Heart right ventricle (tissue), 16 donors: ENCODE measurements at regions of chr17 and their contacts with region 1.

Region 1: DNA sequence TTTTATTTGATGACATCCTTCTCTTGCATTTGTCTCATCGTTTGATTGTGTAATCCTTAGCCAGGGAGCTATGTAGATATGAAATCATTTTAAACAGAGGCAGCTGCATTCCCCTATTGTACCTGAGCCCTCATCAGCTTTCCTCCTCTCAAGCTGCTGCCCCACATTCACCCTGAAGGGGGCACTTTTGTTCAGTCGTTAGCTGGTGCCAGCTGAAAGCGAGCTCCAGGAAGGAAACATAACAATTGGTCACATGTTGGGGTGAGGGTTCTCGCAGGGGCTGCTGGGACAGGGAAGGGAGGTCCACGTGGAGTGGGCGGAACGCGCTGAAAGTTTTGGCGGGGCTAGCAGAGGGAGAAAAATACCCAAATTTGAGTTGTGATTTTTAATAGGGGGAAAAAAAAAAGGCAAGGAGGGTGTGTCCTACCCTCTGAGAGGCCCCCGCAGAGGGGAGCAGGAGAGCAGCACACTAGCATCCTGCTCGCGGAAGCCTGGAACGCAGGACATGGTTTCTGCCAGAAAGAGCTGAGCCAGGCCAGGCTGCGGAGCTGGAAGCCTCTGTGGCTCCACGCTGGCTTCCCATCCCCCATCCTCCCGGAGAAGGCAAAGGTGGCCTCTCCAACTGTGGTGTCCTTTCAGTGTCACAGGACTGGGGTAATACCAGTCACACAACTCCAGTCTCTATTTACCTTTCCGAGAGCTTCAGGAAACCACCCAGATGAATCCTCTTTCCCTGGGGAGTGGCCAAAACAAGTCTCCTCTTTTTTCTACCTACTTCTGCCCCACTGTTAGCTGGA is 8.5 kb upstream of the MSL1 start:
- DNase-seq: peak; percentile 86 to 95
- ATAC-seq: peak; percentile 70 to 79 (median 75)
- H3K4me3 ChIP-seq: peak overlapping the region in 9 of 10 donors; percentile 32 to 59 (median 49)
- H3K27ac ChIP-seq: peak overlapping the region; percentile 71 to 99 (median 93)
- H3K4me1 ChIP-seq: peaks cover 41 to 62% (median 58%) of the 10 kb centered on the region in 9 donors
- H3K27me3 ChIP-seq: no peaks in the 10 kb centered on the region
- CTCF ChIP-seq: peak; percentile 72 to 96 (median 84)

Region 2: DNA sequence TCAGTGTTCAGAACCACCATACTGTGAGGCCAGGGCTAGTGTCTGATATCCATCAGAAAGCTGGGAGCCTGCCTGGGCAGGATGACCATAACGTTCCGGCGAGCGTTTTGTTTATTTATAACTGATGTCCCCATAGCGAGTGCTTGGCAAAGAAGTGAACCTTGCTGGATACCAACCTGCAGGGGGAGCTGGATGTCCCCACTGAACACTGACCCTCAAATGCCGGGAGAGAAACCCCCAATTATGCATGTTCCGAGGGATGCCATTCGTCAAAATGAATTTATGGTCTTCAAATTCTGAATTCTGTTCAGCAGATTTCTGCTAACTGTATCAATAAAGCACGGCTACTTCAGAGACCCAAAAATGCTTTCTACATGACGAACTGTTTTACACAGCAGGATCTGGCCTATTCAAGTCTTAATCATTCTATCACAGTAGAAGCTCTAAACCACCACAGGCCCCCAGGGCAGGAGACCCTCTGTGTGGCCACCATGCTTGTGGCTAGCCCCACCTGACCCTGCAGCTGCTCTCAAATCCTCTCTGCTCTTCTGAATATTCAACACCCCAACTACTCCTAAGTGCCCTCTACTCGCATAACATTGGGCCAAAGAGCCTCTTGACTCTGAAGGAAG is 74.3 kb before region 1 on chr17:
- intact Hi-C with region 1: loop called in 2 of 10 experiments (anchors 2 to 5 kb)
- DNase-seq: peak; percentile 54 to 87
- ATAC-seq: peak; percentile 88 to 98 (median 94)
- H3K4me3 ChIP-seq: peak overlapping the region in 1 of 10 donors; percentile 12
- H3K27ac ChIP-seq: peak overlapping the region; percentile 51 to 86 (median 78)
- H3K4me1 ChIP-seq: peaks cover 0 to 30% (median 17%) of the 10 kb centered on the region in 9 donors
- H3K27me3 ChIP-seq: no peaks in the 10 kb centered on the region
- CTCF ChIP-seq: peak; percentile 65 to 85 (median 73)

Region 3: GRCh38 chr17:40098846-40099618 is 14.3 kb before region 1 on chr17:
- intact Hi-C with region 1: loop called in 4 of 10 experiments (anchors 1 kb)
- DNase-seq: peak; percentile 100
- ATAC-seq: peak; percentile 81 to 88 (median 84)
- H3K4me3 ChIP-seq: peak overlapping the region; percentile 59 to 100 (median 84)
- H3K27ac ChIP-seq: peak overlapping the region; percentile 81 to 99 (median 95)
- H3K4me1 ChIP-seq: peaks cover 52 to 90% (median 79%) of the 10 kb centered on the region in 9 donors
- H3K27me3 ChIP-seq: no peaks in the 10 kb centered on the region
- CTCF ChIP-seq: no peak

Region 4: GRCh38 chr17:40168262-40168832 is 55.0 kb after region 1 on chr17:
- intact Hi-C with region 1: loop called in 9 of 10 experiments (anchors 1 to 10 kb)
- DNase-seq: peak in 1 of 2 donors; percentile 32
- ATAC-seq: peak; percentile 29 to 67 (median 60)
- H3K4me3 ChIP-seq: no peak overlapping the region
- H3K27ac ChIP-seq: peak overlapping the region in 6 of 10 donors; percentile 27 to 67 (median 42)
- H3K4me1 ChIP-seq: peaks cover 0 to 12% (median 6%) of the 10 kb centered on the region in 9 donors
- H3K27me3 ChIP-seq: no peaks in the 10 kb centered on the region
- CTCF ChIP-seq: peak; percentile 68 to 89 (median 82)

Region 5: DNA sequence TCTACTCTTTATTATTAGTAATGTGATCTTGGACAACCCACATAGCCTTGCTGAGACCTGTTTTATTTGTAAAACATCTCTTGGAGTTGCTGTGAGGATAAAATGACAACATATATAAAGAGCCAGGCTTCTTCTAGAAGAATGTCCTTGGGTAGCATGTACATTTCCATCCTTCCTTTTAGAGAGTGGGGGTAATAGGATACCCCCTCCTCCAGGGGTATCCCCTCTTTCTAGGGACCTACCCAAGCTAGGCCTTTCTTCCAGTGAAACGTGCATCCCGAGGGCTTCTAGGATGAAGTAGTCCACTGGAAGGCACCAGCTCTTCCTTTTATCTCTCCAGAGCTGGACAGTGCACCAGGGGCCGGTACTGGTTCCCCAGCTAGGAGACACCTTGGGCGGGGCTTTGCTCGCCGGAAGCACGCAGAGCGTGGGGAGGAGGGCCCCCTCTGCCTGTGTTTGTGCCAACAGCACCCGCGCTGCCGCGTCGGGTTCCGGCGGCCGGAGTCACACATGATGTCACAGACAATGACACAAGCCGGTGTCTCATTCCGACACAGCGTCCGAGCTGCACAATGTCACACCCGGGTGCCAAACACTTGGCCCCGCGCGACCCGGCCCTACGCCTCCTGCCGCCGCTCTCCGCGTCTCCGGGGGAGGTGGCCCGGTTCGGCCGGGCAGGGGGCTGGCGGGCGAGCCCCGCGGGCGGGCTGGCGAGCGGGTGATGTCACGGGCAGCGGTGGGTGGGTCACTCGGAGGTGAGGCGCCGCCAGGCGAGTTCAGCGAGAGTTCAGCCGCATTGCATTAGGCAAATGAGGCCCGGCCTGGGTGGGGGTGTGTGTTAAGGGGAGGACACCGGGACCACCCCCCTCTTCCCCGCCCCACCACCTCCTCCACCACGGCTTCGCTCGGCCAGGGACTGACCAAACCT is 227.8 kb after region 1 on chr17:
- intact Hi-C with region 1: loop called in 1 of 10 experiments (anchors 10 kb)
- DNase-seq: peak; percentile 93
- ATAC-seq: peak; percentile 58 to 79 (median 73)
- H3K4me3 ChIP-seq: peak overlapping the region; percentile 78 to 97 (median 90)
- H3K27ac ChIP-seq: peak overlapping the region; percentile 88 to 99 (median 98)
- H3K4me1 ChIP-seq: peaks cover 10 to 82% (median 70%) of the 10 kb centered on the region in 9 donors
- H3K27me3 ChIP-seq: no peaks in the 10 kb centered on the region
- CTCF ChIP-seq: peak in 6 of 9 donors; percentile 32 to 55 (median 42)